Activated naive CD4-positive, alpha-beta T cell treated with anti-CD3 and anti-CD28 coated beads for 36 hours (primary cell): ENCODE measurements at regions of chr11 and their contacts with region 1.

Region 1: GRCh38 chr11:122853971-122854446 is 15.7 kb downstream of the CRTAM start:
- DNase-seq: peak; percentile 74
- H3K4me3 Mint-ChIP-seq: no peak overlapping the region
- H3K27ac Mint-ChIP-seq: no peak overlapping the region
- H3K4me1 Mint-ChIP-seq: peaks cover 47% of the 10 kb centered on the region
- H3K27me3 Mint-ChIP-seq: no peaks in the 10 kb centered on the region

Region 2: GRCh38 chr11:122578168-122578825 is 275.7 kb before region 1 on chr11:
- CTCF ChIA-PET with region 1: interaction called, 8 read pairs
- intact Hi-C with region 1: loop called (anchors 1 kb)
- DNase-seq: peak; percentile 17
- H3K4me3 Mint-ChIP-seq: no peak overlapping the region
- H3K27ac Mint-ChIP-seq: no peak overlapping the region
- H3K4me1 Mint-ChIP-seq: peaks cover 7% of the 10 kb centered on the region
- H3K27me3 Mint-ChIP-seq: no peaks in the 10 kb centered on the region

Region 3: DNA sequence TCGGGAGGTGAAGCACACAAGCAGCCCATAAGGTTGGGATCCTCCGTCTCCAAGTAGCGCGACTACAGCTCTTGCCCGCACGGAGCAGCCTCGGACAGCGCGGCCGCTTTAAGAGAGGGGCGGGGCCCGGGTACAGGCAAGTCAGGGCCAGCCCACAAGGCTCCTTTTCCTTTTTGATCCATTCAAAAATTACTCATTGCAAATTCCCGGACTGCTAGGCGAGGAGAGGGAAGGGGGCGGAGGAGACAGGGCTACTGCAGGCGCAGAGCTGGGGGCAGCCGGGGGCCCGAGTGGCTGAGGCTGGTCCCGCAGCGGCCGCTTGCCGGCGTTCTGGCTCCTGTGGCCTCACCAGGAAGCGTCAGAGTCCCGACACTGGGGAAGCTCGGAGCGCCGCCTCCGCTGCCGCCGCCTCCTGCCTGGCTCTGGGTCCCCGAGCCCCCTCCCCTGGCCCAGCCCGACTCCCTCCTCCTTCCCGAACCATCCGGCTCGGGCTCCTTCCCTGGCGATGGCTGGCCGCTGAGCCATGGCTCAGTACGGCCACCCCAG is 198.4 kb before region 1 on chr11 and contains the start of gene UBASH3B:
- CTCF ChIA-PET with region 1: interaction called, 10 read pairs
- intact Hi-C with region 1: loop called (anchors 1 kb)
- DNase-seq: peak; percentile 64
- H3K4me3 Mint-ChIP-seq: peak within 1 kb of the TSS; percentile 93
- H3K27ac Mint-ChIP-seq: peak within 1 kb of the TSS; percentile 87
- H3K4me1 Mint-ChIP-seq: peaks cover 37% of the 10 kb centered on the region
- H3K27me3 Mint-ChIP-seq: no peaks in the 10 kb centered on the region
- total RNA-seq, gene UBASH3B: 17.9 to 21.1 TPM

Region 4: GRCh38 chr11:122781378-122782195 is 72.4 kb before region 1 on chr11:
- CTCF ChIA-PET with region 1: interaction called, 289 read pairs
- intact Hi-C with region 1: loop called (anchors 1 kb)
- DNase-seq: peak; percentile 87
- H3K4me3 Mint-ChIP-seq: no peak overlapping the region
- H3K27ac Mint-ChIP-seq: no peak overlapping the region
- H3K4me1 Mint-ChIP-seq: peaks cover 22% of the 10 kb centered on the region
- H3K27me3 Mint-ChIP-seq: no peaks in the 10 kb centered on the region

Region 5: DNA sequence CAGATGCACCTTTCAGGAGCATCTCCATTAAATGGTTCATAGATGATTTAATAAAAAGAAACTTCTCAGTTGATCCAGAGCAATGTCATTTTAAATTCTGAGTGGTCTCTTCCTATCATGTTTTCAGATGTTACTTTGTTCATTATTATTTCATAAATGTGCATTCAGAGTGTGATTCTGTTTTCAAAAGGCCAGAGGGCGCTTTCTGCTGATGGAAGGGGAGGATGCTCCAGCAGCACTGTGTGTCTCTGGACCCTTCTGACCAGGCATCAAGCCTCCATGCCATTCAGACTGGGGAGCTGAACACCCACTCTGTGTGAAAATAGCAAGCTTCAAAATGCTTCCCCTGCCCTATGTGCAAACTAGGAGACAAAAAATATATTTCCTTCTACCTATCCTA is 39.6 kb before region 1 on chr11:
- CTCF ChIA-PET with region 1: interaction called, 63 read pairs
- intact Hi-C with region 1: loop called (anchors 1 kb)
- DNase-seq: peak; percentile 26
- H3K4me3 Mint-ChIP-seq: no peak overlapping the region
- H3K27ac Mint-ChIP-seq: no peak overlapping the region
- H3K4me1 Mint-ChIP-seq: peaks cover 19% of the 10 kb centered on the region
- H3K27me3 Mint-ChIP-seq: no peaks in the 10 kb centered on the region

Region 6: GRCh38 chr11:122843281-122844141 is 10.5 kb before region 1 on chr11:
- CTCF ChIA-PET with region 1: interaction called, 24 read pairs
- intact Hi-C with region 1: loop called (anchors 1 kb)
- DNase-seq: peak; percentile 71
- H3K4me3 Mint-ChIP-seq: peak overlapping the region; percentile 38
- H3K27ac Mint-ChIP-seq: peak overlapping the region; percentile 43
- H3K4me1 Mint-ChIP-seq: peaks cover 30% of the 10 kb centered on the region
- H3K27me3 Mint-ChIP-seq: no peaks in the 10 kb centered on the region